ENCODE measurements at regions of chr2 and their contacts with region 1.

Region 1: DNA sequence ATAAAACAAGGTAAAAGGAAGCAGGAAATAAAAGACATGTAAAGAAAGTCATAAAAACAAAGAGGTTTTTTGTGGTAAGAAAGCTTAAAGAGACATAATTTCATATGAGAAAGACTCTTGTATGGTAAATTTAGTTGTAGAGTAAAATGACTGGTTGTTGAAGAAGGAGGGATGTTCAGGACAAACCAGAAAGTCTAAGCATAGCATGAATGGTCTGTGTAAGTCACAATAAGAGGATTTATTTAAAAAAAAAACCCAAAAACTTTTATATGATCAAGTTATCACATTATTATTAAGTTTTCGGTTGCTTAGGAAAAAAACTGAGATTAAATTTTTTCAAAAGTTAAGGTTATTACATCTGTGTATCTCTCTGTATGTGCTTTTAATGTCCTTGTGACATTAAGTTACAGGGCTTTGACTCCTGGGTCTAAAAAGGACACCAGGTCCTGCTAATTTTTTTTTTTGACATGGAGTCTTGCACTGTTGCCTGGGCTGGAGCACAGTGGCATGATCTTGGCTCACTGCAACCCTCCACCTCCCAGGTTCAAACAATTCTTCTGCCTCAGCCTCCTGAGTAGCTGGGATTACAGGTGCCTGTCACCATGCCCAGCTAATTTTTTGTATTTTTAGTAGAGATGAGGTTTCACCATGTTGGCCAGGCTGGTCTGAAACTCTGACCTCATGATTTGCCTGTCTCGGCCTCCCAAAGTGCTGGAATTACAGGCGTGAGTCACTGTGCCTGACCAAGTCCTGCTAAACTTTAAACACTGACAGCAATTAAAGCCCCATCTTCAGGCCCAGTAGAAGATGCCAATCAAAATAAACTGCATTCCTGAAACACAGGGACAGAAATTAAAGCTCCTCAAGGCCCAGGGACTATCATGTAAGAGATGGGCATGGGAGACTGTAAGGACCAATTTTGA is 14.2 kb upstream of the OXER1 start:
- DNase-seq: no peak
- H3K4me3 ChIP-seq: no peak overlapping the region
- H3K27ac ChIP-seq: no peak overlapping the region
- H3K4me1 ChIP-seq: no peaks in the 10 kb centered on the region
- H3K27me3 ChIP-seq: no peaks in the 10 kb centered on the region
- CTCF ChIP-seq: no peak

Region 2: GRCh38 chr2:42503291-42503690 is 274.9 kb before region 1 on chr2:
- CTCF ChIA-PET with region 1: no interaction called
- POLR2A ChIA-PET with region 1: no interaction called
- intact Hi-C with region 1: no loop called
- DNase-seq: no peak
- H3K4me3 ChIP-seq: no peak overlapping the region
- H3K27ac ChIP-seq: no peak overlapping the region
- H3K4me1 ChIP-seq: no peaks in the 10 kb centered on the region
- H3K27me3 ChIP-seq: no peaks in the 10 kb centered on the region
- CTCF ChIP-seq: no peak

Region 3: GRCh38 chr2:42799881-42800280 is 21.7 kb after region 1 on chr2:
- CTCF ChIA-PET with region 1: no interaction called
- POLR2A ChIA-PET with region 1: interaction called, 12 read pairs
- intact Hi-C with region 1: no loop called
- DNase-seq: no peak
- H3K4me3 ChIP-seq: no peak overlapping the region
- H3K27ac ChIP-seq: no peak overlapping the region
- H3K4me1 ChIP-seq: no peaks in the 10 kb centered on the region; the same call in 1 of the 2 replicates
- H3K27me3 ChIP-seq: no peaks in the 10 kb centered on the region
- CTCF ChIP-seq: no peak

Region 4: GRCh38 chr2:42844901-42845821 is 67.0 kb after region 1 on chr2:
- CTCF ChIA-PET with region 1: no interaction called
- POLR2A ChIA-PET with region 1: no interaction called
- intact Hi-C with region 1: no loop called
- DNase-seq: no peak
- H3K4me3 ChIP-seq: no peak overlapping the region
- H3K27ac ChIP-seq: no peak overlapping the region
- H3K4me1 ChIP-seq: no peaks in the 10 kb centered on the region
- H3K27me3 ChIP-seq: no peaks in the 10 kb centered on the region
- CTCF ChIP-seq: no peak

Measured in PC-9 (cell line).